ENCODE measurements at regions of chr11 and their contacts with region 1.

Region 1: GRCh38 chr11:82858556-82859091 is 41.6 kb downstream of the PRCP start:
- DNase-seq: peak; percentile 23
- H3K4me3 ChIP-seq: peak overlapping the region; percentile 14
- H3K27ac ChIP-seq: peak overlapping the region; percentile 95
- H3K27me3 ChIP-seq: no peaks in the 10 kb centered on the region
- CTCF ChIP-seq: no peak

Region 2: DNA sequence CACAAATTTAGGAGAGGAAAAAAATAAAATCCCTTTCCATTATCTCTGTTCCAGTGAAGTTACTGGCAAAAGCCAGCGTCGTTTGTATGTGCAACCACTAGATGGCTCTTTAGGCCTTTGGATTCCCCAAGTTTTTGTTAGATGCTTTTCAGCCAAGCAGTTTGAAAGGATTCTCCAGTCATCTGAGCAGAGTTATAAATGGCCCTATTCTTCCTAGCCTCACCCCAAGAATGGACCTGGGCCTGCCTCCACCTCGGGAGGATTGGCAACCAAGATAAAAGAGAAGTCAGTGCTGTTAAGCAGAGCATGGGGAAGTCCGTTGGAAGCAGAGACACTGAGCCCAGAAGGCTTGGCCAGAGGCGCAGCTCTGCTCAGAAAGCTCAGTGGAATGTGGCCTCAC is 140.3 kb before region 1 on chr11:
- CTCF ChIA-PET with region 1: interaction called, 10 read pairs
- POLR2A ChIA-PET with region 1: no interaction called
- DNase-seq: peak; percentile 20
- H3K4me3 ChIP-seq: no peak overlapping the region
- H3K27ac ChIP-seq: no peak overlapping the region
- H3K27me3 ChIP-seq: peaks cover 4% of the 10 kb centered on the region
- CTCF ChIP-seq: peak; percentile 83

Region 3: GRCh38 chr11:82823647-82824619 is 34.7 kb before region 1 on chr11:
- CTCF ChIA-PET with region 1: no interaction called
- POLR2A ChIA-PET with region 1: no interaction called
- DNase-seq: no peak
- H3K4me3 ChIP-seq: no peak overlapping the region
- H3K27ac ChIP-seq: no peak overlapping the region
- H3K27me3 ChIP-seq: no peaks in the 10 kb centered on the region
- CTCF ChIP-seq: no peak

Region 4: DNA sequence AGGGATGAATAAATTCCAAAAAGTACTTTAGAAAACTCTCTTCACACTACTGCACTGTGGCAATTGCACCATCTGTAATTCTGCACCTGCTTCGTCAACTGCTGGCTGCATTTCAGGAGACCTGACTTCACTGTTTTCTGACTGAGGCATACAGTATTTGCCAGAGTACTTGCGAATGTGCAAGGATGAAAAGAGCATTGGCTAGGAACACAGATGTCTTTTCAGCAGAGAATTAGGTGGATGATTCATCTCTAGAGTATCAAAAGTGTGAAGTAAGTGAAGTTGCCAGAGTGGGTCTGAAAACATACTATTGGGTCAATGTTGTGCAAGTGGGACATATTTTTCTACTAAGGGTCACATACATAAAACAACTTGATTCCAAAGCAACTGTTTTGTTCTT is 855.1 kb after region 1 on chr11:
- CTCF ChIA-PET with region 1: no interaction called
- POLR2A ChIA-PET with region 1: no interaction called
- DNase-seq: no peak
- H3K4me3 ChIP-seq: no peak overlapping the region
- H3K27ac ChIP-seq: no peak overlapping the region
- H3K27me3 ChIP-seq: peaks cover 3% of the 10 kb centered on the region
- CTCF ChIP-seq: no peak

Measured in AG04450 (cell line).